CD4-positive, alpha-beta T cell (primary cell): ENCODE measurements at regions of chrX and their contacts with region 1.

Region 1: DNA sequence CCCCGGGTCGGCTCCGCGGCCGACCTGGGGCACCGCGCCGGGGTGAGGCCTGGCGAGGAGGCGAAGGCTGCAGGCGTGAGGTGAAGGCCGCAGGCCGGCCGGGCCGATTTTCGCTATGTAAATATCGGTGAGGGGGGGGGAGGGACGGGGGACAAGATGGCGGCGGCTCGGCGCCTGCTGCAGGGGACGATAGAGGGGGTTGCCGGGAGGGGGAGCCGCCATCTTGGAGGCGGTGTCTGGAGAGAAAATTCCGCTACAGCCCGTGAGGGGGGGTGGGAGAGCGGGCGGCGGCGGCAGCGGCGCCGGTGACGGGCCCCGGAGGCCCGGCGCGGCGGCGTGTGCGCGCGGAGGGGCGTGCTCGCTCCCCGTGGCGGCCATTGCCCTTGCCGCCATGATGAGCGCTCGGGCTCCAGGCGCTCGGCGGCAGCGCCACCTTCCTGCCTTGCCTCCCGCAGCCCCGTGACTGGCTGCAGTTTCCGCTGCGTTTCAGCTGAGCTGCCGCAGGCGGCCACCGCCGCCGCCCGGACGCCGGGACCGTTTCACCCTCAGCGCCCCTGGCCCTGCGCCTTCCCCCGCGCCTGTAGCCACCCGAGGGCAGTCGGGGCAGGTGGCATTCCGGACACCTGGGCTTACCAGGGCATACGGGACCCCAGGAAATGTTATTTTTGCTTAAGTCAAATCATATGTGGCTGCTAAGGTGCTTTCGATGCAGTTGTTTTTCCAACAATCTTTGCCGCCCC is 692 bp downstream of the ZFX start:
- DNase-seq: peak; percentile 64 to 94 (median 83)
- ATAC-seq: peak; percentile 74
- H3K4me3 ChIP-seq: peak overlapping the region; percentile 74
- H3K4me3 Mint-ChIP-seq: peak overlapping the region; percentile 94
- H3K27ac ChIP-seq: peak overlapping the region; percentile 79 to 80
- H3K27ac Mint-ChIP-seq: peak overlapping the region; percentile 90
- H3K4me1 ChIP-seq: peaks cover 33% of the 10 kb centered on the region
- H3K4me1 Mint-ChIP-seq: peaks cover 73% of the 10 kb centered on the region
- H3K27me3 ChIP-seq: no peaks in the 10 kb centered on the region
- H3K27me3 Mint-ChIP-seq: no peaks in the 10 kb centered on the region
- CTCF ChIP-seq: peak; percentile 43

Region 2: DNA sequence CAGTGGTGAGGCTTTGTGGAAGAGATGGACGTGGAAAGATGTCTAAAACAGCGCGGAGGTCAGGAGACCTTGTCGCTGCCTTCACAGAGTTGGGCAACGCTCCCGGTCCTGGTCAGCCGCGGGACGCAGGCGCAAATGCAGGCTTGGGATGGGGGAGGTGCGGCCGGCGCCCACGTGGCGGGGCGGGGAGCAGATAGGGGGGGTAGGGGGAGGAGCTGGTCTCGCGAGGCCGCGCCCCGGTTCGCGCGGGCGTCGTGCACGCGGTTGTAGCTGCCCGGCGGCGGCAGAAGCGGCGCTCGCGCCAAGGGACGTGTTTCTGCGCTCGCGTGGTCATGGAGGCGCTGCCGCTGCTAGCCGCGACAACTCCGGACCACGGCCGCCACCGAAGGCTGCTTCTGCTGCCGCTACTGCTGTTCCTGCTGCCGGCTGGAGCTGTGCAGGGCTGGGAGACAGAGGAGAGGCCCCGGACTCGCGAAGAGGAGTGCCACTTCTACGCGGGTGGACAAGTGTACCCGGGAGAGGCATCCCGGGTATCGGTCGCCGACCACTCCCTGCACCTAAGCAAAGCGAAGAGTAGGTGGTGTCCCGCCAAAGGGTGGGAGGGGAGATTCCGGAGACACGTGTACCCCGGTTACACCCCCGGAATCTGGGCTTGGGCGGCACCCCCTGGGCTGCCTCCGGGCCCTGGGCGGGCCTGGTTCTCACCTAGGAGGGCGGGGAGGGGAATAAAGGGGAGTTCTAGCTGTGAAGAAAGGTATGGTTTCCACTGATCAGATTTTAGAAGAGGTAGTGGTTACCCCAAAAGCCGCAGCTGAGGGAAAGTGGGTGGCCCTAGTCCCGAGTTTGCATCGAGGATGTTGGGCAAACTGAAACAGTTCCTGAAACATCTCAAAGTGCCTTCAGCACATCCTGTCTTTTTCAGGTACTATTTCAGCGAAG is 482.7 kb before region 1 on chrX and contains the start of gene PRDX4:
- CTCF ChIA-PET with region 1: no interaction called
- POLR2A ChIA-PET with region 1: no interaction called
- intact Hi-C with region 1: loop called in 1 of 2 experiments (anchors 10 kb)
- DNase-seq: peak; percentile 46 to 86 (median 62)
- ATAC-seq: peak; percentile 81
- H3K4me3 ChIP-seq: peak within 1 kb of the TSS; percentile 68
- H3K4me3 Mint-ChIP-seq: peak within 1 kb of the TSS; percentile 96
- H3K27ac ChIP-seq: peak within 1 kb of the TSS; percentile 56 to 62
- H3K27ac Mint-ChIP-seq: peak within 1 kb of the TSS; percentile 85
- H3K4me1 ChIP-seq: no peaks in the 10 kb centered on the region
- H3K4me1 Mint-ChIP-seq: peaks cover 20% of the 10 kb centered on the region
- H3K27me3 ChIP-seq: no peaks in the 10 kb centered on the region
- H3K27me3 Mint-ChIP-seq: no peaks in the 10 kb centered on the region
- CTCF ChIP-seq: no peak
- total RNA-seq, gene PRDX4: 4.4 TPM

Region 3: GRCh38 chrX:23919706-23920320 is 230.4 kb before region 1 on chrX:
- CTCF ChIA-PET with region 1: no interaction called
- POLR2A ChIA-PET with region 1: no interaction called
- intact Hi-C with region 1: no loop called
- DNase-seq: peak in 1 of 14 experiments; percentile 6
- ATAC-seq: no peak
- H3K4me3 ChIP-seq: no peak overlapping the region
- H3K4me3 Mint-ChIP-seq: no peak overlapping the region
- H3K27ac ChIP-seq: no peak overlapping the region
- H3K27ac Mint-ChIP-seq: no peak overlapping the region
- H3K4me1 ChIP-seq: no peaks in the 10 kb centered on the region
- H3K4me1 Mint-ChIP-seq: no peaks in the 10 kb centered on the region
- H3K27me3 ChIP-seq: no peaks in the 10 kb centered on the region
- H3K27me3 Mint-ChIP-seq: no peaks in the 10 kb centered on the region
- CTCF ChIP-seq: no peak

Region 4: DNA sequence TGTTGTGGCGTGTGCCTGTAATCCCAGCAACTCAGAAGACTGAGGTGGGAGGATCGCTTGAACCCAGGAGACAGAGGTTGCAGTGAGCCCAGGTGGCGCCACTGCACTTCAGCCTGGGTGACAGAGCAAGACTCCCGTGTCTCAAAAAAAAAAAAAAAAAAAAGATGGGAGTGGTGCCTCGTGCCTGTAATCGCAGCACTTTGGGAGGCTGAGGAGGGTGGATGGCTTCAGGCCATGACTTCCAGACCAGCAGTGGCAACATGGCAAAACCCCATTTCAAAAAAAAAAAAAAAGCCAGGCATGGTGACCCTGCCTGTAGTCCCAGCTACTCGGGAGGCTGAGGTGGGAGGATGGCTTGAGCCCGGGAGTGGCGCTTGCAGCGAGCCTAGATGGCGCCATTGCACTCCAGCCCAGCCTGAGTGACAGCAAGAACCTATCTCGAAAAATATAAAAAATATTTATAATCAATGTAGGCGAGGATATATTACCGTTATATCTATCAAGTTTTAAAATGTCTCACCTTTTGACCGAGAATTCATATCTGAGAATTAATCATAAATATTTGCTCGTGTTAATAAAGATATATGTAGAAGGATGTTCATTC is 68.5 kb before region 1 on chrX:
- CTCF ChIA-PET with region 1: interaction called, 3 read pairs
- POLR2A ChIA-PET with region 1: interaction called, 10 read pairs
- intact Hi-C with region 1: loop called (anchors 1 to 5 kb)
- DNase-seq: peak; percentile 10 to 78 (median 46)
- ATAC-seq: peak; percentile 90
- H3K4me3 ChIP-seq: peak overlapping the region; percentile 14
- H3K4me3 Mint-ChIP-seq: no peak overlapping the region
- H3K27ac ChIP-seq: no peak overlapping the region
- H3K27ac Mint-ChIP-seq: no peak overlapping the region
- H3K4me1 ChIP-seq: peaks cover 4% of the 10 kb centered on the region
- H3K4me1 Mint-ChIP-seq: peaks cover 7% of the 10 kb centered on the region
- H3K27me3 ChIP-seq: no peaks in the 10 kb centered on the region
- H3K27me3 Mint-ChIP-seq: no peaks in the 10 kb centered on the region
- CTCF ChIP-seq: peak; percentile 65

Region 5: DNA sequence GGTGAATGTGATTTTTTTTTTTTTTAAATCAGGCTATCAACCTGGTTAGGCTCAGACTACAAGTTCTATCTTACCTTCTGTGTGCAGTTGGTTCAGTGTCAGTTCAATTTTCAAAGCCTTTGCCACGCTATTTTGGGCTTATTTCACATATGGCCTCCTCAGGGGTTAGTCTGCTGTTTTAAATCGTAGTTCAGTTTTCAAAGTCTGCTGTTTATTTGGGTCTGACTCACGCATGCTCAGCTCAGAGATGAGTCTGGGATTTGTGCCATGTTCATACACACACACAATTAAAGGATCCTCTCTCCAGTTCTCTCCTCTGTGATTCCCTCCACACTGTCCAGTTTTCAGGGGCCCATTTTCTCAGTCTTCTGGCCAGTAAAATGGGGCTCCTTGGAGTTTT is 33.0 kb before region 1 on chrX:
- CTCF ChIA-PET with region 1: no interaction called
- POLR2A ChIA-PET with region 1: no interaction called
- intact Hi-C with region 1: no loop called
- DNase-seq: no peak
- ATAC-seq: no peak
- H3K4me3 ChIP-seq: no peak overlapping the region
- H3K4me3 Mint-ChIP-seq: no peak overlapping the region
- H3K27ac ChIP-seq: no peak overlapping the region
- H3K27ac Mint-ChIP-seq: no peak overlapping the region
- H3K4me1 ChIP-seq: no peaks in the 10 kb centered on the region
- H3K4me1 Mint-ChIP-seq: no peaks in the 10 kb centered on the region
- H3K27me3 ChIP-seq: no peaks in the 10 kb centered on the region
- H3K27me3 Mint-ChIP-seq: no peaks in the 10 kb centered on the region
- CTCF ChIP-seq: no peak

Region 6: GRCh38 chrX:24169211-24169610 is 19.0 kb after region 1 on chrX:
- CTCF ChIA-PET with region 1: no interaction called
- POLR2A ChIA-PET with region 1: interaction called, 7 read pairs
- intact Hi-C with region 1: loop called (anchors 1 to 2 kb)
- DNase-seq: no peak
- ATAC-seq: no peak
- H3K4me3 ChIP-seq: no peak overlapping the region
- H3K4me3 Mint-ChIP-seq: peak overlapping the region; percentile 62
- H3K27ac ChIP-seq: peak overlapping the region in 1 of 2 donors; percentile 0
- H3K27ac Mint-ChIP-seq: peak overlapping the region; percentile 72
- H3K4me1 ChIP-seq: peaks cover 3% of the 10 kb centered on the region
- H3K4me1 Mint-ChIP-seq: peaks cover 63% of the 10 kb centered on the region
- H3K27me3 ChIP-seq: no peaks in the 10 kb centered on the region
- H3K27me3 Mint-ChIP-seq: no peaks in the 10 kb centered on the region
- CTCF ChIP-seq: no peak

Region 7: DNA sequence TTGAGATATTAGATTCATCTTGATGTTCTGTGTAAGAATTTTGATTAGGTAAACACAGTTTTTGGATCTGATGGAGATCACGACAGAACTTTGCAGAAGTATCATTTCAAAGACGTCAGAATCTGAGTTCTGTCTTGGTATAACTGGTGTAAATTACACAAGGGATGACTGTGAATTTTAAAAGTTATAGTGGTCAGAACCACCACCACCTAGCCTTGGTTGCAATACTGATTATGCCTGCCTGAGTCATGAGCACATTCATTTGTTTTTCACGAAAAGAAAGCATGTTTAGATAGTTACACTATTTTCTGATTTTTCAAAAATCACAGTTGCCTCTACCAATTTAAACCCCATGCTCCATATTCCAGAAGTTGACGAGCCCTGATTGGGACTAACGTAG is 54.1 kb after region 1 on chrX:
- CTCF ChIA-PET with region 1: interaction called, 3 read pairs
- POLR2A ChIA-PET with region 1: no interaction called
- intact Hi-C with region 1: loop called in 1 of 2 experiments (anchors 10 kb)
- DNase-seq: no peak
- ATAC-seq: no peak
- H3K4me3 ChIP-seq: no peak overlapping the region
- H3K4me3 Mint-ChIP-seq: no peak overlapping the region
- H3K27ac ChIP-seq: no peak overlapping the region
- H3K27ac Mint-ChIP-seq: peak overlapping the region; percentile 65
- H3K4me1 ChIP-seq: peaks cover 8% of the 10 kb centered on the region
- H3K4me1 Mint-ChIP-seq: peaks cover 47% of the 10 kb centered on the region
- H3K27me3 ChIP-seq: no peaks in the 10 kb centered on the region
- H3K27me3 Mint-ChIP-seq: no peaks in the 10 kb centered on the region
- CTCF ChIP-seq: no peak

Region 8: GRCh38 chrX:24464836-24465531 is 314.8 kb after region 1 on chrX and contains the start of gene PDK3:
- CTCF ChIA-PET with region 1: no interaction called
- POLR2A ChIA-PET with region 1: no interaction called
- intact Hi-C with region 1: loop called in 1 of 2 experiments (anchors 10 kb)
- DNase-seq: peak; percentile 81 to 95 (median 88)
- ATAC-seq: peak; percentile 94
- H3K4me3 ChIP-seq: peak within 1 kb of the TSS; percentile 89
- H3K4me3 Mint-ChIP-seq: peak within 1 kb of the TSS; percentile 88
- H3K27ac ChIP-seq: peak within 1 kb of the TSS; percentile 82 to 84
- H3K27ac Mint-ChIP-seq: peak within 1 kb of the TSS; percentile 95
- H3K4me1 ChIP-seq: peaks cover 18% of the 10 kb centered on the region
- H3K4me1 Mint-ChIP-seq: peaks cover 36% of the 10 kb centered on the region
- H3K27me3 ChIP-seq: no peaks in the 10 kb centered on the region
- H3K27me3 Mint-ChIP-seq: no peaks in the 10 kb centered on the region
- CTCF ChIP-seq: no peak
- total RNA-seq, gene PDK3: 12.5 to 12.6 TPM

Region 9: GRCh38 chrX:25600776-25601175 is 1450.6 kb after region 1 on chrX:
- CTCF ChIA-PET with region 1: no interaction called
- POLR2A ChIA-PET with region 1: no interaction called
- intact Hi-C with region 1: no loop called
- DNase-seq: no peak
- ATAC-seq: no peak
- H3K4me3 ChIP-seq: no peak overlapping the region
- H3K4me3 Mint-ChIP-seq: no peak overlapping the region
- H3K27ac ChIP-seq: no peak overlapping the region
- H3K27ac Mint-ChIP-seq: no peak overlapping the region
- H3K4me1 ChIP-seq: no peaks in the 10 kb centered on the region
- H3K4me1 Mint-ChIP-seq: no peaks in the 10 kb centered on the region
- H3K27me3 ChIP-seq: no peaks in the 10 kb centered on the region
- H3K27me3 Mint-ChIP-seq: no peaks in the 10 kb centered on the region
- CTCF ChIP-seq: no peak